Aorta (tissue), 5 donors: ENCODE measurements at regions of chr15 and their contacts with region 1.

Region 1: DNA sequence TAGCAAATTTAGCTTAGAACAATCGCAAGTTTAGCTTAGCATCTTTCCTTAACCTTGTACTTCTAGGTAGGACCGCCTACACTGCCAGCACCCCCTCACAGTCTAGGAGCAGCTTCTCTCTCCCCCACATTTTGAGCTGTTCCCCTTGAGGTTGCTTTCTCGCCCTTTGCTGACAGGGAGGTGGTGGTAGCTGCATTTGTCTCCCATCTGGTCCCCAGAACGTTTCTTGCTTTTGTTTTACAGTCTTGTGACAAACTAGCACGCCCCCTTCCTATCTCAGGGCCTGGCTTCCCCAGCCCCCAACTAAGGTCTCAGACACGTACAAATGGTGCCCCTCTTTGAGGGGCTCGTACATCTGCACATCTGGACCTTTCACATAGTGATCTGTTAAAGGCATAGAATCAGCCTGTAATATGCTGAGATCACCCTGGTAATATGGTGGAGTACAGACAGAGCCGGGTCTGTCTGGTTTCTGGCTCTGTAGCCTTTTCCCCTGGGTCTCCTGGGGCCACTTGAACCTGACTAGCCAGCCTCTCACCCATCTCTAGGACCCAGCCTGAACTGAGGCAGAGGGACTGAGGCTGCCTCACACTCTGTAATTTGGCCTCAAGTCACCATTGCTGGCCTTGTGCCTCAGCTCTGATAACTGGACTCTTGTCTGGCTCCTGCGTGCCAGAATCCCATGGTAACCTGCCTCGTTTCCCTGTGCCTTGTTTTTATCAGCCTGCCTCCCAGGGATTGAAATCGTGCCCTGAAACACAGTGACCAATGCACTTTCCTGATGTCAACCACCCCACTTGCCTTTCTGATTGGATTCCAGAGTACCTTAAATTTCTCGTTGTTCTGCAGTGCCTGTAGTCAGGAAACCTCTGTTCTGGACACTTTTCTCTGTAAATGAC is 27.7 kb downstream of the CRTC3 start:
- DNase-seq: peak; percentile 93 to 94
- ATAC-seq: peak; percentile 88
- H3K4me3 ChIP-seq: no peak overlapping the region
- H3K27ac ChIP-seq: peak overlapping the region; percentile 91 to 97
- H3K4me1 ChIP-seq: peaks cover 5 to 7% of the 10 kb centered on the region in 2 donors
- H3K27me3 ChIP-seq: no peaks in the 10 kb centered on the region

Region 2: DNA sequence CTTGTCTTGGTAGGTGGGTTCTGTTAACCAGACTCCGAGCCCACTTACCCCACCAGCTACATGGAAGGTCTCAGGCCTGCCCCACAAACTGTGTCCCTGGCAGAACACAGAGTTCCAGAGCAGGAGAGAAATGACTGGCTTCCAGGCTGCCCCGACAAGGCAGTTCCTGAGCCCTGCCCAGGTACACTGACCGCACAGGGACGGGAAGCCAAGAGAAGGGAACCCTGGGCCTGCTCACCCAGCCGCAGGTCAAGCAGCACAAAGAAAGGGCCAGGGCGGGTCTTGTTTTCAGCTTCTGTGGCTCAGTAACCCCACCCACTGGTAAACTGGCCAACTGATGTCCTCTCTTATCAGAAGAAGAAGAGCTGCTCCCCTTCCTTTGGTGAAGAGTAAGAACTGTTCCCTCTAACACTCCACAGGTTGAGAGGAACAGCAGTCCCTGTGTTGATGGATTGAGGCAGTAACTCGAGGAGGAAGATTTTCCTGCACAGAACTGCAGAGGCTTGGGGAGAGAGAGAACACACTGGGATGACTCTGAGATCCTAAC is 40.7 kb after region 1 on chr15:
- intact Hi-C with region 1: loop called (anchors 5 kb)
- DNase-seq: no peak
- ATAC-seq: no peak
- H3K4me3 ChIP-seq: no peak overlapping the region
- H3K27ac ChIP-seq: peak overlapping the region; percentile 8 to 87
- H3K4me1 ChIP-seq: peaks cover 0 to 8% of the 10 kb centered on the region in 2 donors
- H3K27me3 ChIP-seq: no peaks in the 10 kb centered on the region

Region 3: GRCh38 chr15:90610190-90610589 is 52.8 kb after region 1 on chr15:
- intact Hi-C with region 1: loop called in 1 of 2 experiments (anchors 5 kb)
- DNase-seq: no peak
- ATAC-seq: no peak
- H3K4me3 ChIP-seq: no peak overlapping the region
- H3K27ac ChIP-seq: peak overlapping the region in 1 of 2 donors; percentile 79
- H3K4me1 ChIP-seq: peaks cover 0 to 10% of the 10 kb centered on the region in 2 donors
- H3K27me3 ChIP-seq: no peaks in the 10 kb centered on the region